ENCODE measurements at regions of chr10 and their contacts with region 1.

Region 1: GRCh38 chr10:71390461-71390835 is 6.3 kb upstream of the CDH23 start:
- DNase-seq: no peak
- H3K4me3 Mint-ChIP-seq: no peak overlapping the region
- H3K27ac Mint-ChIP-seq: no peak overlapping the region
- H3K4me1 Mint-ChIP-seq: no peaks in the 10 kb centered on the region
- H3K27me3 Mint-ChIP-seq: peaks cover 53% of the 10 kb centered on the region

Region 2: GRCh38 chr10:71270301-71271220 is 119.9 kb before region 1 on chr10:
- CTCF ChIA-PET with region 1: no interaction called
- POLR2A ChIA-PET with region 1: no interaction called
- DNase-seq: peak; percentile 38
- H3K4me3 Mint-ChIP-seq: no peak overlapping the region
- H3K27ac Mint-ChIP-seq: no peak overlapping the region
- H3K4me1 Mint-ChIP-seq: no peaks in the 10 kb centered on the region
- H3K27me3 Mint-ChIP-seq: no peaks in the 10 kb centered on the region

Region 3: DNA sequence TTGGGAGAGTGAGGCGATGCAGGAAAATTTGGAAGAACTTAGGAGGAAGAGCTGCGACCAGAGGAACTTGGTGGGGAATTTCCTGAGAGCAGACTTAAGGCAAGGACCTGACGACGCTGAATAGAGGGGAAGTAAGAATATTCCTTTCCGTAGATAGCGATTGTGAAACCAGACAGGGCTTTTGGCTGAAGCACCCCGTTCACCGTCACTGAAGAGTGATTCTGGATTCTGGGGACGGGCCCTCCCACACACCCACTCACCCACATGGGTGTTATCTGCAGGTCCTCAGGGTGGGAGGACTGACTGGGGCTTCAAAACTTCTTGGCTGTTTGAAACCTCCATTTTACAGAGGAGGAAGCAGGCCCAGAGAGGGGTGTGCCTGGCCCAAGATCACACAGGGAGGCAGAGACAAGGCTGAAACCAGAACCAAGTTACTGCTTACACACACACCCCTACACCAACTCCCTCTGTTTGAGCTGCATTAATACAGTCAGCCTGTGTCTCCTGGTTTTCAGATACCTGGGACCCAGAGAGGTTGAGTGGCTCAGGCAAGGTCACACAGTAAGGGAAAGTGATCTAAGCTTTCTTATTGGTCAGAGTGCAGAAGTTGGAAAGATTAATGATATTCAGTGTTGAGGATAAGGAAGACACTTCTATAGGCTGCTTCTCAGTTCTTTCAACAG is 30.9 kb before region 1 on chr10:
- CTCF ChIA-PET with region 1: no interaction called
- POLR2A ChIA-PET with region 1: no interaction called
- DNase-seq: no peak
- H3K4me3 Mint-ChIP-seq: no peak overlapping the region
- H3K27ac Mint-ChIP-seq: no peak overlapping the region
- H3K4me1 Mint-ChIP-seq: peaks cover 4% of the 10 kb centered on the region
- H3K27me3 Mint-ChIP-seq: no peaks in the 10 kb centered on the region

Region 4: DNA sequence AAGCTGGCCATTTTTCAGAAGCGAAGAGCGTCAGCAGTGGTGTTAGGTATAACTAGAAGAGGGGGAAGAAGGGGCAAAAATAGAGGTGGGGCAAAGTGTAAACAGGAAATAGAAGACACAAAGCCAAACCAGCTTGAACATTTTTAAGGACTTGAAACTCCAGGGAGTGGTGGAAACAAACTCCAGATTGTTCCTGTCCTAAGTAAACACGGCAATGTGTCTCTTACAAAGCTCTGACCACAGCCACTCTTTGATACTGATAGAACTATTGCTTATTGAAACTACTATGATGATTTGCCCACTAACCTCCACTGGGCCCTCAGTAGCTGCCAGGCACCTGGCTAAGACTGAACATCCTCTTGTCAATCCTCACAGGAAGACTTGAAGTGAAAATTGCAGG is 14.5 kb before region 1 on chr10:
- CTCF ChIA-PET with region 1: interaction called, 6 read pairs
- POLR2A ChIA-PET with region 1: interaction called, 10 read pairs
- DNase-seq: no peak
- H3K4me3 Mint-ChIP-seq: peak overlapping the region; percentile 73
- H3K27ac Mint-ChIP-seq: no peak overlapping the region
- H3K4me1 Mint-ChIP-seq: peaks cover 11% of the 10 kb centered on the region
- H3K27me3 Mint-ChIP-seq: peaks cover 2% of the 10 kb centered on the region

Region 5: DNA sequence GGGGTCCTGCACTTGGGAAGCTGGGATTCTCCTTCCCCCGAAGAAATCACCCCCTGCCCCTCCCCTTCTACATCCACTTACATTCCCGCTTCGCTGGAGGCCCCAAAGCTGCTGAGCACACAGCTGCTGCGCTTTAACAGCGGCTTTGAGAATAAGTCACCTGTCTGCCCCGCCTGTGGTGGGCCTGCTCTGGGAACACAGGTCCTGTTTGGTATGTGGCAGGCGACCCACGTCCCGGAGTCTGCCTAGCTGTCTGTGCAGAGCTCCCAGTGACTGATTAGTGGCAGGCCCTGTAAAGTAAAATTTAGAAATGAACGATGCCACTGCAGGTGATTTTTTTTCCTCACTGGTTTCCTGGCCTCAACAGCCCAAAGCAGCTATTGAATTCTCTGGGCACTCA is 53.2 kb after region 1 on chr10:
- CTCF ChIA-PET with region 1: no interaction called
- POLR2A ChIA-PET with region 1: no interaction called
- DNase-seq: no peak
- H3K4me3 Mint-ChIP-seq: no peak overlapping the region
- H3K27ac Mint-ChIP-seq: no peak overlapping the region
- H3K4me1 Mint-ChIP-seq: no peaks in the 10 kb centered on the region
- H3K27me3 Mint-ChIP-seq: no peaks in the 10 kb centered on the region

Measured in activated CD4-positive, alpha-beta memory T cell treated with anti-CD3 and anti-CD28 coated beads, Interleukin-2, amount 10 ng/mL, durations not matched to agents 7 days and 5 days (primary cell).